Mammary epithelial cell (primary cell): ENCODE measurements at regions of chr14 and their contacts with region 1.

Region 1: GRCh38 chr14:55206175-55206693 is 14.8 kb upstream of the DLGAP5 start:
- DNase-seq: no peak
- H3K4me3 ChIP-seq: no peak overlapping the region
- H3K27ac ChIP-seq: no peak overlapping the region
- H3K4me1 ChIP-seq: no peaks in the 10 kb centered on the region
- H3K27me3 ChIP-seq: no peaks in the 10 kb centered on the region
- CTCF ChIP-seq: no peak

Region 2: DNA sequence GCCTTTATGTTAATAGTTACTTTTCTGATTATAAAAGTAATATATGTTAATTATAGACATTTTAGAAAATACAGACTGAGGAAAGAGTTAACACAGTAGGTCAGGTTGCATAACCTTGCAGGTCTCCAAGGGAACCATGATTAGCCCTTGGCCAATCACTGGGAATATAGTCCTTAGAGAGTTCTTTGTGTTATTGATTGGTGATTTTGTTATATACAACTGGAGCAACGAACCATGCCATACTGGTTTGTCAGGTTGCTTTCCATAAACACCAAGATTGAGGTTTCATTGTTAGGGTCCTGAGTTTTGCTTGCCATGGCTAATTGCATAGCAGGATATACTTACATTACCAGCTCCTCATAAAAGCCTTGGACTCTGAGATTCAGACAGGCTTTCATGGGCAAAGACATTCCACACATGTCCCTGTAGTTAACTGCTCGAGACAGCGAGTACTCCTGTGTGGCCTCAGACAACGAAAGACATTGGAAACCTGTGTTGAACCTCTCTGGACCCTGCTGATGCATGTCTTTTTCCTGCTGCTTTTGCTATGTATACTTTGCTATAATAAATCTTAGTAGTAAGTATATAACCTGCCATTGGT is 121.1 kb before region 1 on chr14:
- CTCF ChIA-PET with region 1: no interaction called
- dilution Hi-C with region 1: loop called (anchors 5 kb)
- in situ Hi-C with region 1: no loop called
- intact Hi-C with region 1: no loop called
- DNase-seq: no peak
- H3K4me3 ChIP-seq: no peak overlapping the region
- H3K27ac ChIP-seq: no peak overlapping the region
- H3K4me1 ChIP-seq: no peaks in the 10 kb centered on the region
- H3K27me3 ChIP-seq: no peaks in the 10 kb centered on the region
- CTCF ChIP-seq: no peak

Region 3: GRCh38 chr14:55117803-55118441 is 88.3 kb before region 1 on chr14:
- CTCF ChIA-PET with region 1: no interaction called
- dilution Hi-C with region 1: no loop called
- in situ Hi-C with region 1: no loop called
- intact Hi-C with region 1: no loop called
- DNase-seq: peak; percentile 69
- H3K4me3 ChIP-seq: no peak overlapping the region
- H3K27ac ChIP-seq: no peak overlapping the region
- H3K4me1 ChIP-seq: peaks cover 14% of the 10 kb centered on the region
- H3K27me3 ChIP-seq: no peaks in the 10 kb centered on the region
- CTCF ChIP-seq: no peak

Region 4: GRCh38 chr14:55254581-55254980 is 48.3 kb after region 1 on chr14:
- CTCF ChIA-PET with region 1: no interaction called
- dilution Hi-C with region 1: no loop called
- in situ Hi-C with region 1: no loop called
- intact Hi-C with region 1: no loop called
- DNase-seq: no peak
- H3K4me3 ChIP-seq: no peak overlapping the region
- H3K27ac ChIP-seq: no peak overlapping the region
- H3K4me1 ChIP-seq: no peaks in the 10 kb centered on the region
- H3K27me3 ChIP-seq: peaks cover 2% of the 10 kb centered on the region
- CTCF ChIP-seq: no peak